ENCODE measurements at regions of chr9 and their contacts with region 1.

Region 1: DNA sequence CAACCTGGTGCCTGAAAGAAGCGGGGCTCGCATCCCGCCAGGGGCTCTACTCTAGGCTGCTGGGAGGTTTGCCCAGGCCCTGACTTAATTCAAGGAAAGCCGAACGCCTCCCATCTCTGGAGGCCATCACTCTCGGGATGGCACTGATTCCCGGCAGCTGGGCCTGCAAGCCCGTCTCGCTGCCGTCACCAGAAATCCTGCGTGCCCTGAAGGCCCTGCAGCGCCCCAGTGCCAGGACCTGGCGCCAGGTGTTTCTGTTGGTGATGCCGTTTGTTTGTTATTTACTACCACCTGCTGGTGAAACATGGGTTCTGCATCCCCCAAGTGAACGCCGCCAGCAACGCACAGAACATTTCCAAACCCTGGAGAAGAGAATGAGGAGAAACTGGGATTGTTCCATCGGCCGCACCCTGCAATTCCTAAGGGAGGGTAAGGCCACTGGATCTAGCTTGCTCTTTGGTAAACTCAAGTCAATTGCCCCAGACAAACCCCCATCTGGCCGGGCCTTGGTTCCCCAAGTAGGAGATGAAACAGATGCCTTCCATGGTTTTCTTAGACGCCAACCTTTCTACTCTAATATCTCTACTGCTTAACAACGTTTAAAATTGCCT is 77.9 kb downstream of the AK8 start:
- DNase-seq: peak; percentile 57
- H3K4me3 Mint-ChIP-seq: no peak overlapping the region
- H3K27ac Mint-ChIP-seq: no peak overlapping the region
- H3K4me1 Mint-ChIP-seq: peaks cover 16% of the 10 kb centered on the region
- H3K27me3 Mint-ChIP-seq: peaks cover 7% of the 10 kb centered on the region
- CTCF ChIP-seq: peak; percentile 70

Region 2: DNA sequence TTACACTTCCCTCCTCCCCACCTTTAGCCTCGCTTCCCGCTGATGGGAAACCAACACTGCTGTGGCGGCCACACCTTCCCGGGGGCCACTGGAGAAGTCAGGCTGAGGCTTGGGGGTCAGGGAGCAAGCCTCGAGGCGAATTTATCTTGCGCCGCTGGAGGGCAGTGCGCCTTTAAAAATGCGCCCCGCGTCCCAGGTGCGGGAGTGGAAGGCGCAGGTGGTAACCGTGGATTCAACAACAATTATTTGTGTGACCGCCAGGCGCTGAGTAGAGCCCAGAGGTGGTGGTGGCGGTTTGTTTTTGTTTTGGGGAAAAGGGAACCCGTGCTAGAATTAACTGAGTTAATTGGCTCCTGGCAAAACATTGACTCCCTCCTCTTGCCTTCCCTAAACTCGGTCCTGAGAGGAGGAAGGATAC is 389.0 kb before region 1 on chr9:
- CTCF ChIA-PET with region 1: no interaction called
- intact Hi-C with region 1: loop called (anchors 10 kb)
- DNase-seq: peak; percentile 73
- H3K4me3 Mint-ChIP-seq: peak overlapping the region; percentile 52
- H3K27ac Mint-ChIP-seq: no peak overlapping the region
- H3K4me1 Mint-ChIP-seq: peaks cover 9% of the 10 kb centered on the region
- H3K27me3 Mint-ChIP-seq: peaks cover 31% of the 10 kb centered on the region
- CTCF ChIP-seq: peak; percentile 64

Region 3: DNA sequence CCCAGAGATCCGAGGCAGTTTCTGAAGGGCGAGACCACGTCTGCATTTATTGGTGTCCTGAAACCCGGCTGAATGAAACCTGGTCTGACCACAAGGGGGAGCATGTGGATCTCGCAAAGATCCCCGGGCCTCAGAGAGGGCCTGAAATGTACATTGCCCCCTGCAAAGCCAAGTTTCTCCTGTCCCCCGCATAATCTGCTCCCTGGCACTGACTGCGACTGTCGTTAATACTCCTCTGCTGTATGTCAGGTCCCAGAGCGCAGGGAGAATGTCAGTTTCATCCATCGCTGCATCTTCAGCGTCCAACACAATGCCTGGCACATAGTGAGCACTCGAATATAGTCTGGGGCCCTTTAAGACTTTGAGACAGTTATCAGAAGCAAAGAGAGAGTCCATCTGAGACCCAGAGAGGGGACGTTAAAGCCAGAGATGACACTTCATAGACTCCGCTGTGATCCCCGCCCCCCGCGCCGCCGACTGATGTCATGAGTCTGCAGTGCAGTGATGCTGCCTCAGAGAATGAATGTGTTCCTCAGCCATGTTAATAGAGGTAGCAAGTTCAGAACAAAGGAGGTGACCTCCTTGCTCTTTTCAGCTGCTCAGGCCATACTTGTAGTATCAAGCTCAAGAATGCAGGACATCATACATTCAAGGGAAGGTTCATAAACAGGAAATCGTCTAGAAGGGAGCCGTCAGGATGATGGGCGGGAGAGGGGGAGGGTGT is 292.2 kb before region 1 on chr9:
- CTCF ChIA-PET with region 1: no interaction called
- intact Hi-C with region 1: loop called (anchors 5 kb)
- DNase-seq: peak; percentile 75
- H3K4me3 Mint-ChIP-seq: no peak overlapping the region
- H3K27ac Mint-ChIP-seq: no peak overlapping the region
- H3K4me1 Mint-ChIP-seq: no peaks in the 10 kb centered on the region
- H3K27me3 Mint-ChIP-seq: peaks cover 9% of the 10 kb centered on the region
- CTCF ChIP-seq: peak; percentile 55

Region 4: DNA sequence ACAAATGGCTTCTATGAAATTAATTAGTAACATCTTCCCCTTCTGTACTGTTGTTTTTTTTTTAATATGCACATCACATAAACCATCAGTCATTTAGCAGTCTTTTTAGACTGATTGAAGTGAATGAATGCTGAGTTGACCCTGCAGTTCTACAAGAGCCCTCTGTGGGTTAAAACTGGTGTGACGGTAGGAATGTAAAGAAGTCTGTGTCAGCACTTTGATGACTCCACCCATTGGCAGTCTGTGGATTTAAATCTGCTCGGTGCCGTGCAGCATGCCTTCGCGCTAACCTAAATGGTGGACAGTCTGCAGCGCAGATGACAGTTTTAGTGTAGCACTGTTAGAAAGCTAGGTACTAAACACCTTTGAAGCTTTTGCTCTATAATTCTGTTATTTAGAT is 126.8 kb before region 1 on chr9:
- CTCF ChIA-PET with region 1: interaction called, 8 read pairs
- intact Hi-C with region 1: loop called (anchors 2 kb)
- DNase-seq: peak; percentile 8
- H3K4me3 Mint-ChIP-seq: peak overlapping the region; percentile 94
- H3K27ac Mint-ChIP-seq: peak overlapping the region; percentile 60
- H3K4me1 Mint-ChIP-seq: peaks cover 21% of the 10 kb centered on the region
- H3K27me3 Mint-ChIP-seq: no peaks in the 10 kb centered on the region
- CTCF ChIP-seq: no peak

Region 5: GRCh38 chr9:132789719-132790118 is 10.4 kb before region 1 on chr9:
- CTCF ChIA-PET with region 1: no interaction called
- intact Hi-C with region 1: no loop called
- DNase-seq: no peak
- H3K4me3 Mint-ChIP-seq: no peak overlapping the region
- H3K27ac Mint-ChIP-seq: no peak overlapping the region
- H3K4me1 Mint-ChIP-seq: peaks cover 20% of the 10 kb centered on the region
- H3K27me3 Mint-ChIP-seq: peaks cover 10% of the 10 kb centered on the region
- CTCF ChIP-seq: no peak

Region 6: DNA sequence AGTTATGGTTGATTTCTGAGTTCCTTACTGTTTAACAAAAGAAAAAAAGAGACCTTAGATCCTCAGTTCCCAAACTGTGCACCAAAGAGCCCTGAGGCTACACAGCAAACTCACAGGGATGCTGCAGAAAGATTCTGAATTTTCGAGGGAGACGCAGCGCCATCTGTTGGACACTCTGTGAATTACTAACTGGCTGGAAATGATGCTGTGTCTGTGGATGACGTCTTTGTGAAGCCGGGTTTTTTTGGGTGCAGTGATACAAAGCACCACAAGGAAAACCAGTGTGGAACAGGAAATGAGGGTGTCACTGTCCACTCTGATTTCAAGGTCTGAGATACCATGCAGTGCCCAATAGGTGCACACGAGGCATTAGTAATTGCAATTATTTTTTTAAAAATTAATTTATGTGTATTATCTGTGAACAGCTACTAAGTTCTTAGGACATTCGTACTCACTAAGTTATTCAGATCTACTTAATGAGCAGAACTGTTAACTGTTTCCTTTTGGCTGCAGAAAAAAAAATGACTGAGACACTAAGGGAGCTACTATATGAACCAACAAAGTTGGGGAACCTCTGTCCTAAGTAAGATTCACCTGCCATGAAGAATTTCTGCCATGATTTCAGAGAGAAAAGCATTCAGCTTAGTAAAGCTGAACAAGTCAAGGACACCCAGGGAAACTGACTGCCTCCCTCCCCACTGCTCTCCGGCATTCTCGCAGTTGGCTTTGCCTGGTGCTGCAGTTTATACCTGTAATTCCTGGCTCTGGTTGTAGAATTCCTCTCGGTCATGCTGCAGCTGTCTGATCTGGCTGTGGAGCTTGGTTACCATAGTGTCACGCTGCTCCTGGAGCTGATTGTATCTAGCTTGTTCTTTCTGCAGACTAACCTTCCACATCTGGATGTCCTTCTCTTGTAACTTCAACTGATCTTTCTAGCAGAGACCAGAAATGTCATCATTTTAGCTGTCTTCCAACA is 102.0 kb after region 1 on chr9:
- CTCF ChIA-PET with region 1: no interaction called
- intact Hi-C with region 1: no loop called
- DNase-seq: peak; percentile 63
- H3K4me3 Mint-ChIP-seq: no peak overlapping the region
- H3K27ac Mint-ChIP-seq: no peak overlapping the region
- H3K4me1 Mint-ChIP-seq: no peaks in the 10 kb centered on the region
- H3K27me3 Mint-ChIP-seq: no peaks in the 10 kb centered on the region
- CTCF ChIP-seq: peak; percentile 27

Region 7: DNA sequence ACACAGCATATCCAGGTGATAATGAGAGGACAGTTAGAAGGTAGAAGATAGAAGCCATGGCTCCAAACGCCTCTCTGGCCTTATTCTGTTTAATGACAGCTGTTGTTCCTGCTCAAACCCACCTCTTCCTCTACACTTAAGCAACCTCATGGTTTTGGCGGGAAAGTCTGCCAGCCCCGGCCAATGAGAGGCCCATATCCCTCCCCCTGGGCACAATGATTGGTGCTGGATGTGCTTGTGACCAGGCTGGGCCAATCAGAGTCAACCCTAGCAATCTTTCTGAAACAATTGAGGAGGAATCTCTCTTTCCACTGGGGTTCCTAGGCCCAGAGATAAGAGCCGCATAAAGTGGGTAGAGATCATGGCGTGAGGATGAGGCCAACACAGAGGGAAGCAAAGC is 173.6 kb after region 1 on chr9:
- CTCF ChIA-PET with region 1: no interaction called
- intact Hi-C with region 1: loop called (anchors 5 kb)
- DNase-seq: no peak
- H3K4me3 Mint-ChIP-seq: no peak overlapping the region
- H3K27ac Mint-ChIP-seq: no peak overlapping the region
- H3K4me1 Mint-ChIP-seq: peaks cover 21% of the 10 kb centered on the region
- H3K27me3 Mint-ChIP-seq: peaks cover 13% of the 10 kb centered on the region
- CTCF ChIP-seq: no peak